ENCODE measurements at regions of chr3 and their contacts with region 1.

Region 1: GRCh38 chr3:163476183-163476582 is 1602.1 kb downstream of the SI start:
- DNase-seq: peak; percentile 82
- H3K4me3 ChIP-seq: peak overlapping the region; percentile 21
- H3K27ac ChIP-seq: peak overlapping the region; percentile 82
- H3K4me1 ChIP-seq: peaks cover 24% of the 10 kb centered on the region
- H3K27me3 ChIP-seq: no peaks in the 10 kb centered on the region
- CTCF ChIP-seq: peak; percentile 65

Region 2: DNA sequence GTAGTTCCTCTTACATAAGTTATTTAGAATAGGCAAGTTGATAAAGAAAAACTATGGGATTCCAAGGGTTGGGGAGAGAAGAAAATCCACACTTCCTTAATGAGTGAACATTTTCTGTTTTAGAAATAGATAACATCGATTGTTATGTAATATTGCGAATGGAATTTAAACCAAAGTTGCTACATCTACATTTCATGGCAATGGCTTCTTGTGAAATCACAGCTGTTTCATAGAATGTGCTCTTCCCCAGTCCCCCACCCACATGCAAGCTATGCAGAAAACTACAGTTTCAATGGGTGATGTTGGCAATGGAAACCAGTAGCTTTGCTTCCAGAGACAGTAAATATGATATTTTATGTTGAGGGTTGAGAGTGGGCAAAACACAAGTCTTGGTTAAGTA is 37.4 kb before region 1 on chr3:
- CTCF ChIA-PET with region 1: no interaction called
- POLR2A ChIA-PET with region 1: no interaction called
- intact Hi-C with region 1: no loop called
- DNase-seq: no peak
- H3K4me3 ChIP-seq: no peak overlapping the region
- H3K27ac ChIP-seq: no peak overlapping the region
- H3K4me1 ChIP-seq: no peaks in the 10 kb centered on the region
- H3K27me3 ChIP-seq: no peaks in the 10 kb centered on the region
- CTCF ChIP-seq: no peak

Region 3: DNA sequence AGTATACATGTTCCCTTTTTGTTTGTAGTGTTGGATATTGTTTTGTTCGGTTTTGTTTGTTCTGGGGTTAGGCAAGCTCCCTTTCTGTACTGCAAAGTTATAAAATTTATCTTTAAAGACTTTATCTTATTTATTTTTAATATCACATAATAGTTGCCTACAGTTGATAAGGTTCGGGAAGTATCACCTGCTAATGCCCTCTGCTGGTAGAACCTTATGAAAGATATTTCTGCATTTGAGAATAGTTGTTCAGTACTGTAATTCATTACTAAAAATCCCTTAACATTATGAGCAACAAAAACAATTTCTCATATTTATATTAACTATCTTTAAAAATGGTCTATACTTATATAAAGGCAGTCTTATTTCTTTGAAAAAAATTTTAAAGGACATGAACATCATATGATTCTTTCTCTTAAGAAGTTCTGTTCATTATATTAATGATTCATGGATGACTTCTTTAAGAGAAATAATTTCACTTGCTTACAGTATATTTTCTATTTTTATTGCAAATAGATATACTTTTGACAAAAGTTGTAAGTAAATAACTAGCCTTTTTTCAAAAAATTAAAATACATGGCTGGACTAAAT is 475.3 kb after region 1 on chr3:
- CTCF ChIA-PET with region 1: no interaction called
- POLR2A ChIA-PET with region 1: no interaction called
- intact Hi-C with region 1: loop called (anchors 10 kb)
- DNase-seq: peak; percentile 33
- H3K4me3 ChIP-seq: no peak overlapping the region
- H3K27ac ChIP-seq: no peak overlapping the region
- H3K4me1 ChIP-seq: peaks cover 3% of the 10 kb centered on the region
- H3K27me3 ChIP-seq: no peaks in the 10 kb centered on the region
- CTCF ChIP-seq: peak; percentile 73

Region 4: DNA sequence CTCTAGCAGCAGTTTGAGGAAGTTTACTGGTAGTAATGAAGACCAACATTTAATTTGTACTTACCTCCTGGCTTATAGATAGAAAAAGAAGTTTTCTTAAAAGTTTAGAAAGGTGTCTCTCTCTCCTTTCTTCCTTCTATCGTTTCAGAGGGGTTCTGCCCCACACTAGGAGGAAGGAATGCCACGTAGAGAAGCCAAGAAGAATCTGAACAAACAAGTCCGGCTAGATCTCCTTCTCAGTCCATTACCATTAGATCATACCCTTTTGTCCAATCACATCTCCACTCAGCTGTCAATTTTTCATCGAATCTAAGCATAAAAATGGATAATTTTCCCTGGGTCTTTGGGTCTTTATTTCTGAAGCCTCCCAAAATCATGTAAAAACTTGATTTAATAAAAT is 554.0 kb after region 1 on chr3:
- CTCF ChIA-PET with region 1: no interaction called
- POLR2A ChIA-PET with region 1: no interaction called
- intact Hi-C with region 1: no loop called
- DNase-seq: no peak
- H3K4me3 ChIP-seq: no peak overlapping the region
- H3K27ac ChIP-seq: no peak overlapping the region
- H3K4me1 ChIP-seq: no peaks in the 10 kb centered on the region
- H3K27me3 ChIP-seq: no peaks in the 10 kb centered on the region
- CTCF ChIP-seq: no peak

Region 5: GRCh38 chr3:165185707-165186327 is 1709.6 kb after region 1 on chr3:
- CTCF ChIA-PET with region 1: no interaction called
- POLR2A ChIA-PET with region 1: no interaction called
- intact Hi-C with region 1: loop called (anchors 5 kb)
- DNase-seq: peak; percentile 80
- H3K4me3 ChIP-seq: no peak overlapping the region
- H3K27ac ChIP-seq: no peak overlapping the region
- H3K4me1 ChIP-seq: peaks cover 20% of the 10 kb centered on the region
- H3K27me3 ChIP-seq: no peaks in the 10 kb centered on the region
- CTCF ChIP-seq: peak; percentile 87